ENCODE measurements at regions of chr22 and their contacts with region 1.

Region 1: GRCh38 chr22:30444632-30445437 is 19.3 kb downstream of the MTFP1 start:
- DNase-seq: peak in 2 of 5 donors; percentile 28 to 36
- H3K4me3 ChIP-seq: no peak overlapping the region
- H3K27ac ChIP-seq: no peak overlapping the region
- H3K4me1 ChIP-seq: peaks cover 17% of the 10 kb centered on the region
- H3K27me3 ChIP-seq: no peaks in the 10 kb centered on the region
- CTCF ChIP-seq: peak in 1 of 3 donors; percentile 21
- EP300 ChIP-seq: no peak
- POLR2A ChIP-seq: no peak

Region 2: GRCh38 chr22:30340911-30341685 is 103.7 kb before region 1 on chr22:
- intact Hi-C with region 1: no loop called
- DNase-seq: no peak
- H3K4me3 ChIP-seq: no peak overlapping the region
- H3K27ac ChIP-seq: no peak overlapping the region
- H3K4me1 ChIP-seq: no peaks in the 10 kb centered on the region
- H3K27me3 ChIP-seq: no peaks in the 10 kb centered on the region
- CTCF ChIP-seq: no peak
- EP300 ChIP-seq: no peak
- POLR2A ChIP-seq: no peak

Region 3: GRCh38 chr22:30485362-30485988 is 40.6 kb after region 1 on chr22:
- intact Hi-C with region 1: loop called in 1 of 4 experiments (anchors 5 kb)
- DNase-seq: peak; percentile 63 to 83 (median 74)
- H3K4me3 ChIP-seq: no peak overlapping the region
- H3K27ac ChIP-seq: no peak overlapping the region
- H3K4me1 ChIP-seq: no peaks in the 10 kb centered on the region
- H3K27me3 ChIP-seq: no peaks in the 10 kb centered on the region
- CTCF ChIP-seq: peak; percentile 90 to 93 (median 93)
- EP300 ChIP-seq: no peak
- POLR2A ChIP-seq: no peak

Measured in ovary (tissue), 10 donors.